Aorta (tissue), 5 donors: ENCODE measurements at regions of chr22 and their contacts with region 1.

Region 1: GRCh38 chr22:33920927-33921524 is 750 bp upstream of the LARGE1 start:
- DNase-seq: peak; percentile 99 to 100
- ATAC-seq: peak; percentile 96
- H3K4me3 ChIP-seq: peak overlapping the region; percentile 69 to 90
- H3K27ac ChIP-seq: peak overlapping the region; percentile 6 to 34
- H3K4me1 ChIP-seq: peaks cover 0 to 2% of the 10 kb centered on the region in 2 donors
- H3K27me3 ChIP-seq: no peaks in the 10 kb centered on the region

Region 2: GRCh38 chr22:33302049-33302545 is 618.9 kb before region 1 on chr22:
- intact Hi-C with region 1: loop called (anchors 5 to 10 kb)
- DNase-seq: peak; percentile 84 to 93
- ATAC-seq: peak; percentile 82
- H3K4me3 ChIP-seq: no peak overlapping the region
- H3K27ac ChIP-seq: no peak overlapping the region
- H3K4me1 ChIP-seq: no peaks in the 10 kb centered on the region
- H3K27me3 ChIP-seq: no peaks in the 10 kb centered on the region

Region 3: GRCh38 chr22:33529424-33530113 is 391.5 kb before region 1 on chr22:
- intact Hi-C with region 1: loop called in 1 of 2 experiments (anchors 10 kb)
- DNase-seq: no peak
- ATAC-seq: no peak
- H3K4me3 ChIP-seq: no peak overlapping the region
- H3K27ac ChIP-seq: no peak overlapping the region
- H3K4me1 ChIP-seq: peaks cover 0 to 5% of the 10 kb centered on the region in 2 donors
- H3K27me3 ChIP-seq: no peaks in the 10 kb centered on the region

Region 4: DNA sequence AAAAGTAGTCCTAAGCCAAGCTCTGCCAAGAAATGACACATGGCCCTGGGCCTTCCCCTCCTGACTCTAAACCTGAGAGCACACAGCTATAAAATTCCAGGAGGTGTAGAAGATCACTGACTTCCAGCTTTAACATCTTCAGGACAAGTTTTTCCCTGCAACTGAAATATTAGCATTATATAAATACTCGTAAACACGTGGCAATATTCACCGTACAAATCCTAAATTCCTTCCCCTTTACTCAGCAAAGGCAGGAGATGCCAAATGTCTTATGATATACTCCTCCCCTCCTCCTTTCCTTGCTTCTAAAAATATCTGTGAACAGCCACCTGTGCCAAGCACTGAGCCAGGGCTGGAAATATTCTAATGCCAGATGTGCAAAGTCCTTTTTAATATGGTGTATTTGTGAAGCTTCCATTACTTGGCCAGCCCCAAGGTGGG is 194.7 kb before region 1 on chr22:
- intact Hi-C with region 1: loop called in 1 of 2 experiments (anchors 5 kb)
- DNase-seq: no peak
- ATAC-seq: peak; percentile 69
- H3K4me3 ChIP-seq: no peak overlapping the region
- H3K27ac ChIP-seq: peak overlapping the region in 1 of 2 donors; percentile 45
- H3K4me1 ChIP-seq: peaks cover 2 to 6% of the 10 kb centered on the region in 2 donors
- H3K27me3 ChIP-seq: no peaks in the 10 kb centered on the region

Region 5: DNA sequence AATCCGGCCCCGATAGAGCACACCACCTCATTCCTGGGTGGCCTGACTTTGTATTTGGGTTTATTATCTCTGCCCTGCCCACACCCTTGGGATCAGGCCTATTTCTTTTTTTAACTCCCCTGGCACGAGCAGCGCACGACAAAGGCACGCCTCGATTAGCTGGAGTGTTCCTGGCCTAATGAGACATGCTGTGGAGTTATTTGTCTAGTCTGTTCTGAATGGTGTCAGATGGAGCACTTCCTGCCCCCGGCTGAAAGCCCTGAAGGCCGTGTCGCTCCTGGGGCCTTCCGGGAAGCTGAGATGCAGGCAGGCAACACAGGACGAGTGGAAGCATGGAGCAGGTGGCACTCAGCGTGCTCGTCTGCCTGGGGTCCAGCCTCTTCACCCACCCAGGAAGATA is 47.8 kb before region 1 on chr22:
- intact Hi-C with region 1: loop called in 1 of 2 experiments (anchors 5 kb)
- DNase-seq: no peak
- ATAC-seq: peak; percentile 50
- H3K4me3 ChIP-seq: no peak overlapping the region
- H3K27ac ChIP-seq: peak overlapping the region; percentile 2 to 66
- H3K4me1 ChIP-seq: peaks cover 1 to 6% of the 10 kb centered on the region in 2 donors
- H3K27me3 ChIP-seq: no peaks in the 10 kb centered on the region